HEK293 (cell line): ENCODE measurements at regions of chr15 and their contacts with region 1.

Region 1: GRCh38 chr15:44501768-44502366 is 35.1 kb upstream of the EIF3J start:
- H3K4me3 ChIP-seq: no peak overlapping the region
- H3K27ac ChIP-seq: no peak overlapping the region
- H3K4me1 ChIP-seq: no peaks in the 10 kb centered on the region
- CTCF ChIP-seq: no peak

Region 2: DNA sequence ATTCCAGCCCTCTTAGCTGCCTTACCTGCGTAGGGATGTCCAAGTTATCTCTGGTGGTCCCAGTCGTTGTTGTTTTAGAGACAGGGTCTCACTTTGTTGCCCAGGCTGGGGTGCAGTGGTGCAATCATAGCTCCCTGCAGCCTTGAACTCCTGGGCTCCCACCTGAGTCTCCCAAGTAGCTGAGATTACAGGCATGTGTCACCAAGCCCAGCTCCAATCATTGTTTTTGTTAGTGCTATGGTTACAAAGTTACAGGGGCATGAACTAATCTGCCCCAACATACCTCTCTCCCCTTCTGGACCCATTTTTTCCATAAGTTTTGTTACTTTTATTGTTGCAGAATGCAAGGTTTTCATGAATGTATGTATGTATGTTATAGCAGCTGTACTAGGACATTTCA is 19.8 kb before region 1 on chr15:
- CTCF ChIA-PET with region 1: interaction called, 10 read pairs
- POLR2A ChIA-PET with region 1: no interaction called
- H3K4me3 ChIP-seq: no peak overlapping the region
- H3K27ac ChIP-seq: no peak overlapping the region
- H3K4me1 ChIP-seq: no peaks in the 10 kb centered on the region
- CTCF ChIP-seq: no peak

Region 3: DNA sequence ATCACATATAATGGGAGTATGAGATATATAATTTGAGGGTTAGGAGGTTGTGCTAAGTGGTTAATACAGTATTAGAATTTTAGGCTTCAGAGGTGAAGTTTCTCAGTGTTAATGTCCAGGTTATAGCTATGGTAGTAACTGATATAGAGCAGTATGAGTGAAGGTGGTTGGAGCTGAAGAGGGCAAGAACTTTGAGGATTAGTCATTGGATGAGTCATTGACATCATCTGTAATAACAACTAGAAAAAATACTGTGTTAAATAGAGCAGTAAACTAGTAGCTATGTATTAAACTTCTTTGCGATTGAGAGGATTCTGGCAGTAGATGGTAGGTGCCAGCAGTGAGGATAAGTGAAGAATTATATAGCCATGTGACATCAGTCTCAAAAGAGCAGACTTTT is 12.4 kb before region 1 on chr15:
- CTCF ChIA-PET with region 1: interaction called, 10 read pairs
- POLR2A ChIA-PET with region 1: no interaction called
- H3K4me3 ChIP-seq: no peak overlapping the region
- H3K27ac ChIP-seq: no peak overlapping the region
- H3K4me1 ChIP-seq: peaks cover 4% of the 10 kb centered on the region
- CTCF ChIP-seq: no peak